B cell (primary cell): ENCODE measurements at regions of chr6 and their contacts with region 1.

Region 1: GRCh38 chr6:139369568-139370282 is 4.7 kb downstream of the CITED2 start:
- DNase-seq: peak; percentile 64
- ATAC-seq: no peak
- H3K4me3 ChIP-seq: no peak overlapping the region
- H3K4me3 Mint-ChIP-seq: no peak overlapping the region
- H3K27ac ChIP-seq: no peak overlapping the region
- H3K27ac Mint-ChIP-seq: no peak overlapping the region
- H3K4me1 ChIP-seq: peaks cover 13 to 20% of the 10 kb centered on the region in 2 donors
- H3K4me1 Mint-ChIP-seq: peaks cover 28% of the 10 kb centered on the region
- H3K27me3 ChIP-seq: no peaks in the 10 kb centered on the region
- H3K27me3 Mint-ChIP-seq: no peaks in the 10 kb centered on the region
- CTCF ChIP-seq: peak; percentile 78

Region 2: DNA sequence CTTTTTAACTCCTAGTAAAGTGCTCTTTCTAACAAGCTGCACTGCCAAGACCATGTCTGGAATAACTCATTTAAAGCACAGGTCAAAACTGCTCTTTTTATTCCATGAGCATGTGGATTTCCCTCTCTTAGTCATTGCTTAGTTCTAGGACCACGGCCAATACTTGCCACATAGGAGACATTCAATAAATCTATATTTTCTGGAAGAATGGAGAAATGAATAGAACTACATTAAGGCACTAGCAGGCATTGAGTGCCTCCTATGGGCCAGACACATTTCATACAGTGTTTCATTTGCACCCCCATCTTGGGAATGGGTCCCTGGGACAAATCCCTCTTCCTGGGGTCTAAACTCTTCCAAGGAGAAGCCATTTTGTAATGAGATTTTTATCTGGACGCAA is 557.5 kb after region 1 on chr6:
- CTCF ChIA-PET with region 1: interaction called, 10 read pairs
- POLR2A ChIA-PET with region 1: no interaction called
- intact Hi-C with region 1: loop called (anchors 2 kb)
- DNase-seq: peak; percentile 28
- ATAC-seq: no peak
- H3K4me3 ChIP-seq: no peak overlapping the region
- H3K4me3 Mint-ChIP-seq: no peak overlapping the region
- H3K27ac ChIP-seq: no peak overlapping the region
- H3K27ac Mint-ChIP-seq: no peak overlapping the region
- H3K4me1 ChIP-seq: no peaks in the 10 kb centered on the region
- H3K4me1 Mint-ChIP-seq: no peaks in the 10 kb centered on the region
- H3K27me3 ChIP-seq: no peaks in the 10 kb centered on the region
- H3K27me3 Mint-ChIP-seq: peaks cover 9% of the 10 kb centered on the region
- CTCF ChIP-seq: peak; percentile 19

Region 3: GRCh38 chr6:139996253-139996834 is 626.6 kb after region 1 on chr6:
- CTCF ChIA-PET with region 1: interaction called, 10 read pairs
- POLR2A ChIA-PET with region 1: no interaction called
- intact Hi-C with region 1: no loop called
- DNase-seq: peak; percentile 37
- ATAC-seq: peak; percentile 39
- H3K4me3 ChIP-seq: no peak overlapping the region
- H3K4me3 Mint-ChIP-seq: no peak overlapping the region
- H3K27ac ChIP-seq: no peak overlapping the region
- H3K27ac Mint-ChIP-seq: no peak overlapping the region
- H3K4me1 ChIP-seq: no peaks in the 10 kb centered on the region
- H3K4me1 Mint-ChIP-seq: no peaks in the 10 kb centered on the region
- H3K27me3 ChIP-seq: no peaks in the 10 kb centered on the region
- H3K27me3 Mint-ChIP-seq: no peaks in the 10 kb centered on the region
- CTCF ChIP-seq: no peak